ENCODE measurements at regions of chr17 and their contacts with region 1.

Region 1: DNA sequence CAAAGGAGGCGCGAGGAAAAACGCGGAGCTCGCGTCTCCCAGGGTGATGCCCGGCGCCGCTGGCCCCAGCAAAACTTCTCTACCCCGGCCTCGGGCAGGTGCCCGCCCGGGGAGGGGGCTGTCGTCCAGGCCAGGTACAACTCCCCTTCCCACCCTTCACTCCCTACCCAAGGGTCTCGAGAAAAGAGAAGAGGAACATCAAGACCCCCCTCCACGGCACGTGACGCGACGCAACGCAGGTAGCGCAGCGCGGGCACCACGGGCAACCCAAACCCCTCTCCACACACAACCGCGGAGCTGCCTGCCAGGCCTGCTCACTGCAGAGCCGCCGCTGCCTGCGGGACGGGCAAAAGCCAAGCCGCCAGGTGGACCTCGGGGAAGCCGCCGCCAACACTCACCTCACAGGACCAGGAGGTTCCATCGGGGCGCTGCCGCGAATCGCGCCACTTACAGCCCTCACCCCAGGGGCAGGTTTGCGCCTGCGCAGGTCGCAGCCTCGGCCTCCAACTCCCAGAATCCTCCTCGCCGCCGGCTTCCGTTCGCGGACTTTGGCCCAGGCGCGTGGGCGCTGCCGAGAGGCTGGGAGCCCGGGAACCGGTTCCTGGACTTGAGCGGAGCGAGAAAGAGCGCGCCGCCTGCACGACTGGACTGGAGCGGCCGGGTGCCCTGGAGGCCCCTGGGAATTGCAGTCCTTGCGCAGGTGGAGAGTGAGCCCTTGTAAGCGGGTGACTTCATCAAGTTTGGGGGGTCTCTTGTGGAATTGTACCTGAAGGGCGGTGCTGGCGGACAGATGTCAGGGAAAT is at the start of gene ZNF232:
- DNase-seq: peak; percentile 95 to 98
- ATAC-seq: peak; percentile 95 to 96 (median 96)
- H3K4me3 ChIP-seq: peak within 1 kb of the TSS; percentile 91
- H3K27ac ChIP-seq: peak within 1 kb of the TSS; percentile 93
- H3K4me1 ChIP-seq: peaks cover 7% of the 10 kb centered on the region
- H3K27me3 ChIP-seq: peaks cover 3 to 23% (median 11%) of the 10 kb centered on the region in 3 donors
- CTCF ChIP-seq: no peak
- total RNA-seq, gene ZNF232: 5.8 to 12.2 (median 7.4) TPM

Region 2: GRCh38 chr17:5078106-5079028 is 33.2 kb before region 1 on chr17 and contains the start of gene ZFP3:
- intact Hi-C with region 1: loop called in 1 of 2 experiments (anchors 5 kb)
- DNase-seq: peak; percentile 92 to 95
- ATAC-seq: peak; percentile 98 to 99 (median 99)
- H3K4me3 ChIP-seq: peak within 1 kb of the TSS; percentile 82
- H3K27ac ChIP-seq: peak within 1 kb of the TSS; percentile 95
- H3K4me1 ChIP-seq: peaks cover 10% of the 10 kb centered on the region
- H3K27me3 ChIP-seq: peaks cover 0 to 2% (median 0%) of the 10 kb centered on the region in 3 donors
- CTCF ChIP-seq: peak; percentile 12
- total RNA-seq, gene ZFP3: 6.8 to 12.3 (median 8.0) TPM